Activated B cell treated with CpG ODN at 0.5 μM for 24 hours (primary cell): ENCODE measurements at regions of chr3 and their contacts with region 1.

Region 1: DNA sequence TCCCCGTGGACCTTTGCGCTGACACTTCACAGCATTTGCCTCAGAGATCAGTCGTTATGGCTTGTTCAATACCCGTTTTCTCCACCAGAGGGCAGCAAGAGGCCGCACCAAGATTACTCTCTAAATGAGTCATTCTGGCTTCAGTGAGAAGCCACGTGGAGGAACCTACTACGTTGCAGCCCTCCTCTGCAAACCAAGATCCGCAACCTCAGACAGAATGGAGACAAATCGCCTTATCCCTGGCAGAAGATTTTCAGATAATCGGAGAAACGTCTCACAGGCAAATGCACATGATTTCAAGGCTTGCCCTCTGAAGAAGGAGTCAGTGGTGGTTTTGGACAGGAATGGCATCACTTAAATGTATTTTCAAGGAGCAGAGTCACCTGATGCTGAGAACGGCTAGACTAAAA is 60.5 kb downstream of the GTPBP8 start:
- DNase-seq: peak; percentile 68
- ATAC-seq: peak; percentile 99
- H3K4me3 Mint-ChIP-seq: no peak overlapping the region
- H3K27ac Mint-ChIP-seq: no peak overlapping the region
- H3K4me1 Mint-ChIP-seq: peaks cover 3% of the 10 kb centered on the region
- H3K27me3 Mint-ChIP-seq: no peaks in the 10 kb centered on the region
- CTCF ChIP-seq: no peak

Region 2: GRCh38 chr3:113136071-113136470 is 84.8 kb after region 1 on chr3:
- CTCF ChIA-PET with region 1: interaction called, 3 read pairs
- POLR2A ChIA-PET with region 1: no interaction called
- intact Hi-C with region 1: loop called (anchors 1 kb)
- DNase-seq: no peak
- ATAC-seq: no peak
- H3K4me3 Mint-ChIP-seq: no peak overlapping the region
- H3K27ac Mint-ChIP-seq: no peak overlapping the region
- H3K4me1 Mint-ChIP-seq: no peaks in the 10 kb centered on the region
- H3K27me3 Mint-ChIP-seq: no peaks in the 10 kb centered on the region
- CTCF ChIP-seq: no peak

Region 3: GRCh38 chr3:113552851-113553250 is 501.5 kb after region 1 on chr3:
- CTCF ChIA-PET with region 1: no interaction called
- POLR2A ChIA-PET with region 1: no interaction called
- intact Hi-C with region 1: loop called (anchors 1 kb)
- DNase-seq: no peak
- ATAC-seq: peak; percentile 84
- H3K4me3 Mint-ChIP-seq: no peak overlapping the region
- H3K27ac Mint-ChIP-seq: no peak overlapping the region
- H3K4me1 Mint-ChIP-seq: peaks cover 17% of the 10 kb centered on the region
- H3K27me3 Mint-ChIP-seq: no peaks in the 10 kb centered on the region
- CTCF ChIP-seq: no peak